Psoas muscle (tissue), 8 donors: ENCODE measurements at regions of chr2 and their contacts with region 1.

Region 1: GRCh38 chr2:213065583-213066442 is 85.6 kb downstream of the IKZF2 start:
- DNase-seq: no peak
- ATAC-seq: peak in 3 of 4 donors; percentile 41 to 72 (median 67)
- H3K4me3 ChIP-seq: peak overlapping the region; percentile 48
- H3K27ac ChIP-seq: peak overlapping the region; percentile 40
- H3K4me1 ChIP-seq: peaks cover 44% of the 10 kb centered on the region
- H3K27me3 ChIP-seq: no peaks in the 10 kb centered on the region
- CTCF ChIP-seq: no peak

Region 2: GRCh38 chr2:213046431-213046830 is 19.4 kb before region 1 on chr2:
- intact Hi-C with region 1: loop called in 1 of 2 experiments (anchors 1 kb)
- DNase-seq: no peak
- ATAC-seq: no peak
- H3K4me3 ChIP-seq: no peak overlapping the region
- H3K27ac ChIP-seq: no peak overlapping the region
- H3K4me1 ChIP-seq: no peaks in the 10 kb centered on the region
- H3K27me3 ChIP-seq: no peaks in the 10 kb centered on the region
- CTCF ChIP-seq: no peak